ENCODE measurements at regions of chr12 and their contacts with region 1.

Region 1: DNA sequence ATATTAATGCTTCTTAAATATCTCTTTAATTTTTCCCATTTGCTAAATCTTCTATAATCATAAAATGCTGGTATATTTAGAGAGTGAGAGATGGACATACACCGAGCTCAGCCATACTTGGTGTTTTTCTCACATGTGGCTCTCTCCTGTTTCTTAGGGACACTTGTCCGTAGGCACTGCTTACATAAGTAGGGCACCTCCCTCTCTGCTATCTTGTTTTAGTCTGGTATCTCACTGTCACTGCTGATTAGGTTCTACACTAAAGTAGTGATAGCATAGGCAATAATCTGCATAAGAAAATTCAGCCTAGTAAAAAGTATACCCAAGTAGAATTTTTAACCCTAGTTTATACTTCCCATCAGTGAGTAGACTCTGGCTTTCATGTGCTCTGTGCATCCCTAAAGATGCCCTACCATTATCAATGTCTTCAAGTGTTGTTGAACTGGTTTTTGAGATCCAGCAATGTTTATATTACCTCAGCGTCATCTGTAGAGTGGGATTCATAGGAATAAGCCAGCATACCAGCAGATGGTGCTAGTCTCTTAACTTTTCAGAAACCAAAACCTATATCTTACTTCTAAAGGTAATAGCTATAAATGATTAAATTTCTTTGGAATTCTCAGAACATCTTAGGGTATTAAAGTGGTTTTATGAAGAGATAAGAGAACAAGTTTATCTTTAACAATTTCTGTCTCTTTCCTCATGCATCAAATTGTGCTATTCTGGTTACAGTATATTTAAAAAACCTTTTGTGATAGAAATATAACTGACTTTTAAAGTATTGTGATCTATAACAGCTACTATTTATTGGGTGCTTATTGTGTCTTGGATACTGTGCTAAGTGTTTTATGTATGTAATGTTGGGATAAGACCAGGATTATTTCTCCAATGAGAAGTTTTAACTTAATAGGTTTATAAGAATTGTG is 32.9 kb downstream of the ARID2 start:
- DNase-seq: peak; percentile 60
- H3K4me3 ChIP-seq: no peak overlapping the region
- H3K27ac ChIP-seq: no peak overlapping the region
- H3K4me1 ChIP-seq: peaks cover 2% of the 10 kb centered on the region
- H3K27me3 ChIP-seq: no peaks in the 10 kb centered on the region
- CTCF ChIP-seq: peak; percentile 69 to 73

Region 2: DNA sequence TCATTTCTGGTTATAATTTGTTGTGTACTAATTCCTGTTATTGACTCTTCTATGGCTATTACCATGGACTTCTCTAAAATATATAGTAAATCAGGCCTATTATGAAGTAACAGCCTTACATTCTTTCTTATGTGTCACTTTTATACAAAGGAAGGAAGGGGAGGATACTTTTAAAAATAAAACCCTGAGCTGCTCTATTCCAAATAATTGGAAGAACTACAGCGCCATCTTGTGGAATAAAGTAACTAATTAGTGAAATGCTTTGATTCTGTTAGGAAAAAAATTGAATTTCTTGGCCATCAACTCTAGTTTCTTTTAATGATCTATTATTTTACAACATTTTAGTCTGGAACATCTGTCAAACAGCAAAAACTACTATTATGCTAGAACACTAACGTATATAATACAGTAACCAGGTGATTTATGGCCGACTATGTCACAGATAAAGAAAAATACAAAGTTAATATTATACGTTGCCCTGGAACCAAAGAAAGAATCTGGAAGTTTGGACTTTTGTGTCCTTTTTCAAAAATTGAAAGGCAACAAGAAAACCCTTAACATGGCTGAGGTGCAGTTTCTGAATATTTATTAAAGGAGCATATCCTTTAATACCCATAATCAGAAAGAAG is 831.4 kb before region 1 on chr12:
- CTCF ChIA-PET with region 1: no interaction called
- dilution Hi-C with region 1: no loop called
- in situ Hi-C with region 1: no loop called
- intact Hi-C with region 1: no loop called
- DNase-seq: peak; percentile 47
- H3K4me3 ChIP-seq: no peak overlapping the region
- H3K27ac ChIP-seq: no peak overlapping the region
- H3K4me1 ChIP-seq: no peaks in the 10 kb centered on the region
- H3K27me3 ChIP-seq: no peaks in the 10 kb centered on the region
- CTCF ChIP-seq: peak; percentile 28 to 50

Region 3: DNA sequence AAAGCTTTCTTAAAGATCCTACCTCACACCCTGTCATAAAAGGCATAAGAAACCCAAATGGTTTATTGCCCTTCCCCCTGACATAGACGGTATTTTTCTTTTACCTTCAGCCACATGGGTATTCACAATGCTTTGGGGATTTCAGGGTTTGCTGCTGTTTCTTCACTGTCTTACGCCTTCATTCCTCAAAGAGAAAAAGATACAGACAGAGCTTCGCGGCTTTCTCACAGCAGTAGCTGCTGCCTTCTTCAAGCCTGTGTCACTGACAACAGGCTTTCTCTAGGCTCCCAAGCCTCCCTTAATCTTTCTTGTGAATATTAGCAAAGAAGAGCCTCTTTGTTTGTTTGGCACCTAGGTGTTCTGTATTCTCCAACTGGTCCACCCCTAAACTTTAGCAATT is 230.3 kb before region 1 on chr12:
- CTCF ChIA-PET with region 1: interaction called, 12 read pairs
- dilution Hi-C with region 1: no loop called
- in situ Hi-C with region 1: no loop called
- intact Hi-C with region 1: no loop called
- DNase-seq: no peak
- H3K4me3 ChIP-seq: no peak overlapping the region
- H3K27ac ChIP-seq: no peak overlapping the region
- H3K4me1 ChIP-seq: no peaks in the 10 kb centered on the region
- H3K27me3 ChIP-seq: no peaks in the 10 kb centered on the region
- CTCF ChIP-seq: no peak

Region 4: GRCh38 chr12:45893240-45893639 is 130.8 kb after region 1 on chr12:
- CTCF ChIA-PET with region 1: no interaction called
- dilution Hi-C with region 1: no loop called
- in situ Hi-C with region 1: no loop called
- intact Hi-C with region 1: loop called (anchors 10 kb)
- DNase-seq: peak; percentile 16
- H3K4me3 ChIP-seq: no peak overlapping the region
- H3K27ac ChIP-seq: no peak overlapping the region
- H3K4me1 ChIP-seq: no peaks in the 10 kb centered on the region
- H3K27me3 ChIP-seq: no peaks in the 10 kb centered on the region
- CTCF ChIP-seq: peak in 1 of 2 donors; percentile 28

Region 5: DNA sequence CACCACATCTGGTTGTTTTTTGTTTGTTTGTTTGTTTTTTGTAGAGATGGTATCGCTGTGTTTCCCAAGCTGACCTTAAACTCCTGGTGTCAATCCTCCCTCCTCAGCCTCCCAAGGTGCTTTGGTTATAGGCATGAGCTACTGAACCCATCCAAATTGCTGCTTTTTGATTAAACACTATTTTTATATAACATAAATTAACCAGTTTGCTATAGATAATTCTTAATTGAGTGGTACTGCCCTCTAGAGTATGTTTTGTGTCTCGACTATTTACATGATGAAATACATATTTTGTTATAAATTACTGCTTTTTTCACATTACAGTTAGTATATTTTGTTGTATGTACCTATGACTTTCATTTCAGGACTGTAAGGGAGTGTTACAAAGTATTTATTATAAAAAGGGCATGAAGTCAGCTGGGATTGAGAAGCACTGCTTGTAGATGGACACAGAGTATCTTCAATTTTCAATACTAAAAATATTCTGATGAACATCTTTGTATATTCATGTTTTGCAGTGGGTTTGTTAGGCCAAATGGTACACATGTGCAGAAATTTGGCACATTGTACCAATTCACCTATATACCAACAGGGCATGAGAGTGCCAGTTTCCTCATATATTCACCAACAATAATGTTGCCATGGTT is 242.8 kb after region 1 on chr12:
- CTCF ChIA-PET with region 1: no interaction called
- dilution Hi-C with region 1: no loop called
- in situ Hi-C with region 1: no loop called
- intact Hi-C with region 1: loop called (anchors 1 kb)
- DNase-seq: no peak
- H3K4me3 ChIP-seq: no peak overlapping the region
- H3K27ac ChIP-seq: no peak overlapping the region
- H3K4me1 ChIP-seq: no peaks in the 10 kb centered on the region
- H3K27me3 ChIP-seq: no peaks in the 10 kb centered on the region
- CTCF ChIP-seq: peak; percentile 35 to 41

Measured in mammary epithelial cell (primary cell).